ENCODE measurements at regions of chr1 and their contacts with region 1.

Region 1: GRCh38 chr1:25858906-25859789 is at the start of gene AUNIP:
- DNase-seq: peak in 1 of 2 experiments; percentile 84
- H3K4me3 ChIP-seq: peak within 1 kb of the TSS; percentile 76 to 94 (median 86)
- H3K27ac ChIP-seq: peak within 1 kb of the TSS; percentile 89
- H3K4me1 ChIP-seq: no peaks in the 10 kb centered on the region; a peak in 2 of 7 replicates
- H3K27me3 ChIP-seq: no peaks in the 10 kb centered on the region
- CTCF ChIP-seq: no peak
- EP300 ChIP-seq: no peak
- POLR2A ChIP-seq: peak; percentile 88 to 94
- RAD21 ChIP-seq: no peak
- total RNA-seq, gene AUNIP: 22.9 and 23.2 TPM in 2 replicates

Region 2: GRCh38 chr1:25844536-25845337 is 14.4 kb before region 1 on chr1:
- CTCF ChIA-PET with region 1: interaction called, 7 read pairs
- POLR2A ChIA-PET with region 1: interaction called, 11 read pairs
- DNase-seq: no peak
- H3K4me3 ChIP-seq: no peak overlapping the region
- H3K27ac ChIP-seq: no peak overlapping the region
- H3K4me1 ChIP-seq: peaks cover 0 to 3% (median under 1%) of the 10 kb centered on the region in 4 experiments; a peak in 2 of 7 replicates
- H3K27me3 ChIP-seq: no peaks in the 10 kb centered on the region
- CTCF ChIP-seq: no peak
- EP300 ChIP-seq: no peak
- POLR2A ChIP-seq: no peak
- RAD21 ChIP-seq: no peak

Measured in H1 (cell line).